Activated CD4-positive, alpha-beta T cell treated with anti-CD3 and anti-CD28 coated beads for 36 hours (primary cell): ENCODE measurements at regions of chrX and their contacts with region 1.

Region 1: DNA sequence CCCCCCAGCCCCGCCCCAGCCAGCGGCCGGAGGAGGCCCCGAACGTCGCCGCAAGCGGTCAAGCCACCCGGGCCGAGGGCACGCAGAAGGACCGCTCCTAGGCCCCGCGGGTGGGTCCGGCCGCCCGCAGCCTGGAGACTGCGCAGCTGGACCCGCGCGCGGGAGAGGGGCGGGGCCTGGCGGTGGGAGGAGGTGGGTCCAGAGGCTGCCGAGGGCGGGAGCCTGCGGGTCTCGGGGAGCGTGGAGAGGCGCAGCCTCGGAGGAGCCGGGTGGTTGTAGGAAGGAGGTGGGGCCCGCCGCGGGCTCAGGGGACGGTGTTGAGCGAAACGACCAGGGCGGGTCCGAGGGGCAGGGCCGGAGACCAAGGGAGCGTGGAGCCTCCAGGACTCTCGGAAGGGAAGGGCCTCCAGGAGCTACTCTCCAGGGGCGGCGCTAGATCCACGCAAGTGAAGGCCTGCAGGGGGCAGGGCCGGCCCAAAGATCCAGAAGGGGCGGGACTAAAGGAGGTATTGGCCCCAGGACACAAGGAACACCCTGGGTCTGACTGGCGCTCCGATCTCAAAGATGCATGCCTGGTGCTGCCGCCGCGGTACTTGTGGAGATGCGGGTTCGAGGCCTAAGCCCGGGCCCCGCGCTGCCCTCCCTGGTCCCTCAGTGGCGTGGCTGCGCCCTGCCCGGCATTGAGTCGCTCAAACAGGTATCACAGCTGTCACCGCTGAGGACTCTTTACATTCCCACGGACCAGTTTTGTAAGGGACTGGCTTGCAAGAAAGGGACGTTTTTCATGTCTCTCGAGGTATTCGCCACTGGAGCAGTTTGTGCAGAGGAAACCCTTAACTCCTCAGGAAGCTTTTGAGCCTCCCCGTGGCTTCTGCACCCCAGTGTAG is 5.9 kb downstream of the TIMM17B start:
- DNase-seq: peak; percentile 85
- ATAC-seq: peak; percentile 92
- H3K4me3 Mint-ChIP-seq: peak overlapping the region; percentile 79
- H3K27ac Mint-ChIP-seq: peak overlapping the region; percentile 55
- H3K4me1 Mint-ChIP-seq: peaks cover 23% of the 10 kb centered on the region
- H3K27me3 Mint-ChIP-seq: no peaks in the 10 kb centered on the region

Region 2: GRCh38 chrX:48648336-48648751 is 243.3 kb before region 1 on chrX:
- CTCF ChIA-PET with region 1: no interaction called
- POLR2A ChIA-PET with region 1: interaction called, 5 read pairs
- intact Hi-C with region 1: loop called in 1 of 2 experiments (anchors 5 kb)
- DNase-seq: peak; percentile 47
- ATAC-seq: peak; percentile 64
- H3K4me3 Mint-ChIP-seq: no peak overlapping the region
- H3K27ac Mint-ChIP-seq: no peak overlapping the region
- H3K4me1 Mint-ChIP-seq: peaks cover 6% of the 10 kb centered on the region
- H3K27me3 Mint-ChIP-seq: no peaks in the 10 kb centered on the region

Region 3: GRCh38 chrX:48676106-48676892 is 215.3 kb before region 1 on chrX:
- CTCF ChIA-PET with region 1: no interaction called
- POLR2A ChIA-PET with region 1: no interaction called
- intact Hi-C with region 1: loop called in 1 of 2 experiments (anchors 2 kb)
- DNase-seq: peak; percentile 92
- ATAC-seq: peak; percentile 95
- H3K4me3 Mint-ChIP-seq: peak overlapping the region; percentile 90
- H3K27ac Mint-ChIP-seq: peak overlapping the region; percentile 91
- H3K4me1 Mint-ChIP-seq: peaks cover 19% of the 10 kb centered on the region
- H3K27me3 Mint-ChIP-seq: no peaks in the 10 kb centered on the region

Region 4: DNA sequence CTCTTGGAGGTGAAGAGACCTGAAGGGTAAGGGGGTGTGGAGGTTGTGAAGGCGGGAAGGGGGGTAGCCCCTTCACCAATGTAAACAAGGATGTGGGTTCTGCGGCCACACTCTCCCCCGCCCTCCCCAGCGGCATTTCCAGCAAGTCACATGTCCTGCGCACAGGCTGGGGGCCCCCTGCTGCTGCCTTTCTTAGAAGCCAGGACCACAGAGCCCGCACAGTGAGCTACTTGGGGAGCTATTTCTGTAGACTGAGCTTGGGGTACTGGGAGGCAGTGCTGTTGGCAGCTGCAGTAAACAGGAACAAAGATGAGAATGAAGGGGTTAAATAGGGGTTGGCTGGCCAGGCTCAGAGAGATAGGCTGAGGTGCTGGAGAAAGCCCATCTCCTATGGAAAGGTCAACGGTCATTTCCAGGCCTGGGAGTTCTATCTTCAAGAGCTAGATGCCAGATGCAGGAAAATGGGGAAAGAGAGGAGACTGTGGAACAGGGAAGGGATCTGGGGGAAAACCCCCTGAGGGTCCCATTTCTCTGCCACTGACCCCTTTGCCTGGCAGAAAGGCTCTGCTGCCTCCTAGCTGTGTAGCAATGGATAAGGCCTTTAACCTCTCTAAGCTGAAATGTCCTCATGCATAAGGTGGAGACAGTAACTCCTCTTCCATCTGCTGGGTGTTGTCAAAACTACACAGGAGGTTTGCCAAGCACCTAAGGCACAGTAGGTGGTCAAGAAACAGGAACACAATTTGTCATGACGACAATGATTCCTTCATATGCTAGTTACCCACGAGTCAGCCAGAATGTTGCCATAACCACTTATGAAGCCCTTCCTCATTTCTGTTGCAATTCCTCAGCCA is 45.6 kb after region 1 on chrX:
- CTCF ChIA-PET with region 1: interaction called, 3 read pairs
- POLR2A ChIA-PET with region 1: interaction called, 6 read pairs
- intact Hi-C with region 1: loop called (anchors 1 to 10 kb)
- DNase-seq: peak; percentile 93
- ATAC-seq: peak; percentile 61
- H3K4me3 Mint-ChIP-seq: peak overlapping the region; percentile 64
- H3K27ac Mint-ChIP-seq: peak overlapping the region; percentile 96
- H3K4me1 Mint-ChIP-seq: peaks cover 81% of the 10 kb centered on the region
- H3K27me3 Mint-ChIP-seq: no peaks in the 10 kb centered on the region

Region 5: GRCh38 chrX:48945516-48946348 is 54.1 kb after region 1 on chrX:
- CTCF ChIA-PET with region 1: interaction called, 8 read pairs
- POLR2A ChIA-PET with region 1: no interaction called
- intact Hi-C with region 1: loop called (anchors 1 to 10 kb)
- DNase-seq: peak; percentile 71
- ATAC-seq: peak; percentile 42
- H3K4me3 Mint-ChIP-seq: peak overlapping the region; percentile 17
- H3K27ac Mint-ChIP-seq: peak overlapping the region; percentile 84
- H3K4me1 Mint-ChIP-seq: peaks cover 50% of the 10 kb centered on the region
- H3K27me3 Mint-ChIP-seq: no peaks in the 10 kb centered on the region

Region 6: GRCh38 chrX:49002091-49002935 is 110.7 kb after region 1 on chrX and contains the start of gene GRIPAP1:
- CTCF ChIA-PET with region 1: no interaction called
- POLR2A ChIA-PET with region 1: no interaction called
- intact Hi-C with region 1: loop called in 1 of 2 experiments (anchors 2 kb)
- DNase-seq: peak; percentile 87
- ATAC-seq: peak; percentile 82
- H3K4me3 Mint-ChIP-seq: peak within 1 kb of the TSS; percentile 97
- H3K27ac Mint-ChIP-seq: peak within 1 kb of the TSS; percentile 98
- H3K4me1 Mint-ChIP-seq: peaks cover 34% of the 10 kb centered on the region
- H3K27me3 Mint-ChIP-seq: no peaks in the 10 kb centered on the region
- total RNA-seq, gene GRIPAP1: 57.8 to 63.3 TPM